ENCODE measurements at regions of chr6 and their contacts with region 1.

Region 1: DNA sequence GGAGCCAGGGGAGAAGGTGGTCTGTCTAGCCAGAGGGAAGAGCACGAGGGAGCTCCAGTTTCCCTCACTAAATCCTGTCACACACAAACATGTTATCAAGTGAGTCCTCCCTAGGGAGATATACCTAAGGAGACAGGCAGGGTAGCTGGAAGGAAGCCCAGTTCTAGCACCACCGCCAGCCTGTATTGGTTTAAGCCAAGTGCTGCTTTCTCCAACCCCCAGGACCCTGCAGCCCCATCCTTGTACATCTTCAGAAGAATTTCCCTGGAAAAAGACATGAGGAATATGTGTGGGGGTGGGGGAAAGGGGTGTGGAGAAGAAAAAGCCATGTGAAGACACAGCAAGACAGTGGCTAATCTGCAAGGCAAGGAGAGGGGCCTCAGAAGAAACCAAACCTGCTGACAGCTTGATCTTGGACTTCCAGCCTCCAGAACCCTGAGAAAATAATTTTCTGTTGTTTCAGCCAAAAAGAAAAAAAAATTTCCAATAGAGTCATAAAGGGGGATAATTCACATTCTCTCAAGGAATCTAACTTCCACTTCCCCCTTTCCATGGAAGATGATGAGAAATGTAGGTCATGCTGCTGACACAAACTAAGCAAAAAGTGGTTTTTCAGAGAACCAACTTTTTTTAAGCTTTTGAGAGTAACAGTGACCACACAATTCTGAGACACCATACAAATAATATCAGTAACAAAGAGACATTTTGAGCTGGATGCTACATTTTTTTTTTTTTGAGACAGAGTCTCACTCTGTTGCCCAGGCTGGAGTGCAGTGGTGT is 103.2 kb upstream of the PRDM1 start:
- DNase-seq: no peak
- H3K4me3 ChIP-seq: no peak overlapping the region
- H3K27ac ChIP-seq: no peak overlapping the region
- H3K4me1 ChIP-seq: peaks cover 18% of the 10 kb centered on the region
- H3K27me3 ChIP-seq: no peaks in the 10 kb centered on the region
- CTCF ChIP-seq: no peak
- POLR2A ChIP-seq: no peak

Region 2: DNA sequence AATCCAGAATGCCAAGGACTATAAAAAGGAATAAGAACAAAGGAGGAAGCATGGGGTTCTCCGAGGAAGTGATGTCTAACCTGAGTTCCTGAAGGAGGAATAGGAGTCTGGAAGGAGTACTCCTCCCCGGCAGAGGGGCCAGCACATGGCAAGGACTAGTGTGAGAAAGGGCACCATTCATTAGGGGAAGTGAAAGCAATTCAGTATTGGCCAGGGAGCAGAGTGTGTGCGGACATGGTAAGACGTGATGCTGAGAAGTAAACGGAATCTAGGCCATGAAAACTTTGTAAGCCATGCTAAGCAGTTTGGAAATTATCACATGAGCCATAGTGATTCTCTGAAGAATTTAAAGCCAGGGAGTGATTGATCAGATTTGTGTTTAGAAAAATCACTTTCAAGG is 115.7 kb before region 1 on chr6:
- intact Hi-C with region 1: no loop called
- DNase-seq: no peak
- H3K4me3 ChIP-seq: no peak overlapping the region
- H3K27ac ChIP-seq: no peak overlapping the region
- H3K4me1 ChIP-seq: no peaks in the 10 kb centered on the region
- H3K27me3 ChIP-seq: no peaks in the 10 kb centered on the region
- CTCF ChIP-seq: no peak
- POLR2A ChIP-seq: no peak

Region 3: GRCh38 chr6:105909106-105909505 is 73.8 kb before region 1 on chr6:
- intact Hi-C with region 1: no loop called
- DNase-seq: no peak
- H3K4me3 ChIP-seq: no peak overlapping the region
- H3K27ac ChIP-seq: no peak overlapping the region
- H3K4me1 ChIP-seq: no peaks in the 10 kb centered on the region
- H3K27me3 ChIP-seq: no peaks in the 10 kb centered on the region
- CTCF ChIP-seq: no peak
- POLR2A ChIP-seq: no peak

Region 4: GRCh38 chr6:105967917-105968584 is 14.9 kb before region 1 on chr6:
- intact Hi-C with region 1: loop called (anchors 1 kb)
- DNase-seq: no peak
- H3K4me3 ChIP-seq: no peak overlapping the region
- H3K27ac ChIP-seq: no peak overlapping the region
- H3K4me1 ChIP-seq: no peaks in the 10 kb centered on the region
- H3K27me3 ChIP-seq: no peaks in the 10 kb centered on the region
- CTCF ChIP-seq: no peak
- POLR2A ChIP-seq: no peak

Measured in vagina (tissue), 2 donors.